CD8-positive, alpha-beta memory T cell (primary cell): ENCODE measurements at regions of chr9 and their contacts with region 1.

Region 1: DNA sequence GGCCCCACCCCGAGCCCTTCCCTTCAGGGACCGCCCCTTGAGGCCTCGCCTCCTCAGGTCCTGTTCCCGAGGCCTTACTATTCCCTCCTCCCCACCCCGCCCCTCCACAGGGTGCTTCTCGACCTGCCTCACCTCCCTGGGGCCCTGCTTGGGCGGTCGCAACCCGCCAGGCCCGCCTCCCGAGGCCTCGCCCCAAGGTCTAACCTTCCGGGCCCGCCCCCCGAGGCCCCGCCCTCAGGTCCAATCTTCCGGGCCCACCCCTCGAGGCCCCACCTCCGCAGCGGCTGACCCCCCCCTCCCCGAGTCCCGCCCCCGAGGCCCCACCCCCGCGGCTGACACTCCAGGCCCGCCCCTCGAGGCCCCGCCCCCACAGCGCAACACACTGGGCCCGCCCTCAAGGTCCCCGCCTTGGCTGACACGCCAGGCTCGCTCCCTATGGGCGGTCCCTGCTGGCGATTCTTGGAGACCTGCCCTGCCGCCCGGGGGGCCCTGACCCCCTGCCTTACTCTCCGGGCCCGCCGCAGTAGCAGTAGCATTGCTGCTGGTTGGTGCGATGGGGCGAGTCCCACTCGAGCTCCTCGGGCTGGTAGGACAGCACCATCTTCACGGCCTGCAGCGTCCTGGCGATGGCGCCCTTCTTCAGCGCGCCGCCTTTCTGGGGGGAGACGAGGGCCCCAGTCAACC is 8.2 kb downstream of the PHF19 start:
- DNase-seq: peak; percentile 93 to 99 (median 96)
- H3K4me3 ChIP-seq: peak overlapping the region; percentile 68
- H3K4me3 Mint-ChIP-seq: peak overlapping the region; percentile 92 to 98 (median 93)
- H3K27ac ChIP-seq: peak overlapping the region; percentile 88
- H3K27ac Mint-ChIP-seq: peak overlapping the region; percentile 94 to 98 (median 96)
- H3K4me1 ChIP-seq: peaks cover 15% of the 10 kb centered on the region
- H3K4me1 Mint-ChIP-seq: peaks cover 13 to 43% (median 20%) of the 10 kb centered on the region in 3 donors
- H3K27me3 ChIP-seq: no peaks in the 10 kb centered on the region
- H3K27me3 Mint-ChIP-seq: no peaks in the 10 kb centered on the region

Region 2: DNA sequence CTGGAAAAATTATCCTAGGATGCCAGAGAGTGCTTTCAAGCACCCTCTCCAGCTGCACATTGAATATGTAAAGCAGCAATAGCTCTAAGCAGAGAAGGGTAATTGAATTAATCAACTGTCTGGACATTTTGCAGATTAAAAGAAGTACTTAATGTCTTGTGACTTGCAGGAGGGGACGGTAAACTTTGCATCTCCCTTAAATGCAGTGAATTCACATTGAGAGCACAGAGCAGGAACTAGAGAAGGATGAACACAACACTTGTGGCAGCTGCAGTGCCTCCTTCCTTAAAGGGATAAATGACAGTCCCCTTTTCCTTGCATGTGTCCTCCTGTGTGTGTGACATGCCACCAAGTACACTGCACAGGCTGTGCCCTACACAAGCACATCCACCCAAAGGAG is 281.5 kb before region 1 on chr9:
- CTCF ChIA-PET with region 1: no interaction called
- POLR2A ChIA-PET with region 1: no interaction called
- DNase-seq: no peak
- H3K4me3 ChIP-seq: no peak overlapping the region
- H3K4me3 Mint-ChIP-seq: no peak overlapping the region
- H3K27ac ChIP-seq: no peak overlapping the region
- H3K27ac Mint-ChIP-seq: peak overlapping the region in 1 of 8 donors; percentile 50
- H3K4me1 ChIP-seq: no peaks in the 10 kb centered on the region
- H3K4me1 Mint-ChIP-seq: peaks cover 4 to 14% (median 14%) of the 10 kb centered on the region in 3 donors
- H3K27me3 ChIP-seq: no peaks in the 10 kb centered on the region
- H3K27me3 Mint-ChIP-seq: peaks cover 0 to 3% of the 10 kb centered on the region in 2 donors

Region 3: DNA sequence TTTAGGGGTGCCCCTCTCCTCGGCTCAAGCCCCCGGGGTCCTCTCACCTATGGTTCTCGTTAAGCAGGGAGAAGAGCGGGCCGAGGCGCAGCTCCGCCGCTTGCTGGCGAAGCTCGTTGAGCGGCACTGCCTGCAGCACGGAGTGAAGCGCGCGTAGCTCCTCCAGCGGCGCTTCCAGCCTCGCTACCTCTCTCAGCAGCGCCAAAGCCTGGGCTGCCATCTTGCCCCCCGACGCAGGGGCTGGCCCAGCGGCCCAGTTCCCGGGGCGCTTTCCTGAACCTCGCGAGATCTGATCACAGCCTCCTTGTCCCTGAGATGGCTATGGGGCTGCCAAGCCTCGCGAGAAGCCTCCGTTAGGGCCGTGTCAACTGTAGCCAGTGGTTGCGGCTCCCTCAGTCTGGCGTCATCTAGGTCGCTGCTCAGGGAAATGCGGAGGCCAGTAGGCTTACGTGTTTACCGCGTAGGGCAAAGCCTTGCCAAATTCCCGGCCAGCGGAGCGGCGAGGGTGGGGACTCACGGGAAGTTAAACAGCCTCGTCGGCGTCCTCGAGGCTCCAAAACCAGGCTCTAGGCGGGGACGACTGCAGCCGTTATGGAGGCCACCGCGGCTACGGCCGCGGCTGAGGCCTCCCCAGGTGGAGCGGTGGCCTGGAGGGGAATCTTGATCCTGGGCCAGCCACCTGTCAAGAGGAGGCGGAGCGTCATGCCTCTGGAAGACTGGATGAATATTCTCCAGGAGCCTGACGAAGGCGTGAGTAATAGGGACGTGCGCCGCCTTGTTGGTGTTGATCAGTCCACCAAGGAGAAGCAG is 25.9 kb before region 1 on chr9 and contains the start of gene PSMD5:
- CTCF ChIA-PET with region 1: interaction called, 12 read pairs
- POLR2A ChIA-PET with region 1: interaction called, 6 read pairs
- DNase-seq: peak; percentile 93 to 99 (median 98)
- H3K4me3 ChIP-seq: peak within 1 kb of the TSS; percentile 87
- H3K4me3 Mint-ChIP-seq: peak within 1 kb of the TSS; percentile 93 to 98 (median 96)
- H3K27ac ChIP-seq: peak within 1 kb of the TSS; percentile 99
- H3K27ac Mint-ChIP-seq: peak within 1 kb of the TSS; percentile 97 to 99 (median 98)
- H3K4me1 ChIP-seq: peaks cover 52% of the 10 kb centered on the region
- H3K4me1 Mint-ChIP-seq: peaks cover 69 to 87% (median 83%) of the 10 kb centered on the region in 3 donors
- H3K27me3 ChIP-seq: no peaks in the 10 kb centered on the region
- H3K27me3 Mint-ChIP-seq: no peaks in the 10 kb centered on the region
- total RNA-seq, gene PSMD5: 60.9 to 63.7 TPM

Region 4: DNA sequence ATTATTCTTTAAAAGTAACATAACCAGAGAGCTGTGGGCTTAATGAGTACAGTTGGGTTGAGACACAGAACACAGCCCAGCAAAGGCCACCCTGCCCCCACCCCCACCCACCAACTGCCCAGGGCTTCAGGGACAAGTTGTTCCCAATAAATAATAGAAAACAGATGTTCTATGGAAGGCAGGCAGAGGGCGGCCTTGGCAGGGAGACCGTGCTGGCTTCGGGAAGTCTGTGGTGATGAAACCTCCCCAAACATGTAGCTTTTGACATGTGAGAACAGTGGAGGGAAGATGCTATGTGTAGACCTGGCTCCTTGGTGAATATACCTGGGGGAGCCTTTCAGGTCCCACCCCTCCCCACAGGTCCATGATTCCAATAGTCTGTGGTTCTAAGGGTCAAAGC is 47.8 kb after region 1 on chr9:
- CTCF ChIA-PET with region 1: interaction called, 363 read pairs
- POLR2A ChIA-PET with region 1: interaction called, 7 read pairs
- DNase-seq: no peak
- H3K4me3 ChIP-seq: no peak overlapping the region
- H3K4me3 Mint-ChIP-seq: peak overlapping the region in 6 of 7 donors; percentile 47 to 88 (median 74)
- H3K27ac ChIP-seq: no peak overlapping the region
- H3K27ac Mint-ChIP-seq: peak overlapping the region; percentile 1 to 99 (median 87)
- H3K4me1 ChIP-seq: peaks cover 82% of the 10 kb centered on the region
- H3K4me1 Mint-ChIP-seq: peaks cover 75 to 98% (median 86%) of the 10 kb centered on the region in 3 donors
- H3K27me3 ChIP-seq: no peaks in the 10 kb centered on the region
- H3K27me3 Mint-ChIP-seq: no peaks in the 10 kb centered on the region

Region 5: GRCh38 chr9:120936011-120936763 is 67.4 kb after region 1 on chr9:
- CTCF ChIA-PET with region 1: interaction called, 363 read pairs
- POLR2A ChIA-PET with region 1: interaction called, 18 read pairs
- DNase-seq: peak; percentile 78 to 90 (median 85)
- H3K4me3 ChIP-seq: peak overlapping the region; percentile 10
- H3K4me3 Mint-ChIP-seq: peak overlapping the region; percentile 3 to 85 (median 60)
- H3K27ac ChIP-seq: peak overlapping the region; percentile 52
- H3K27ac Mint-ChIP-seq: peak overlapping the region; percentile 88 to 96 (median 92)
- H3K4me1 ChIP-seq: peaks cover 68% of the 10 kb centered on the region
- H3K4me1 Mint-ChIP-seq: peaks cover 58 to 62% (median 58%) of the 10 kb centered on the region in 3 donors
- H3K27me3 ChIP-seq: no peaks in the 10 kb centered on the region
- H3K27me3 Mint-ChIP-seq: no peaks in the 10 kb centered on the region